ENCODE measurements at regions of chr11 and their contacts with region 1.

Region 1: GRCh38 chr11:119205574-119206510 is at the start of gene CBL:
- DNase-seq: peak; percentile 98
- H3K4me3 Mint-ChIP-seq: peak within 1 kb of the TSS; percentile 91
- H3K27ac Mint-ChIP-seq: peak within 1 kb of the TSS; percentile 85
- H3K4me1 Mint-ChIP-seq: peaks cover 25% of the 10 kb centered on the region
- H3K27me3 Mint-ChIP-seq: no peaks in the 10 kb centered on the region
- total RNA-seq, gene CBL: 30.8 to 31.2 TPM

Region 2: DNA sequence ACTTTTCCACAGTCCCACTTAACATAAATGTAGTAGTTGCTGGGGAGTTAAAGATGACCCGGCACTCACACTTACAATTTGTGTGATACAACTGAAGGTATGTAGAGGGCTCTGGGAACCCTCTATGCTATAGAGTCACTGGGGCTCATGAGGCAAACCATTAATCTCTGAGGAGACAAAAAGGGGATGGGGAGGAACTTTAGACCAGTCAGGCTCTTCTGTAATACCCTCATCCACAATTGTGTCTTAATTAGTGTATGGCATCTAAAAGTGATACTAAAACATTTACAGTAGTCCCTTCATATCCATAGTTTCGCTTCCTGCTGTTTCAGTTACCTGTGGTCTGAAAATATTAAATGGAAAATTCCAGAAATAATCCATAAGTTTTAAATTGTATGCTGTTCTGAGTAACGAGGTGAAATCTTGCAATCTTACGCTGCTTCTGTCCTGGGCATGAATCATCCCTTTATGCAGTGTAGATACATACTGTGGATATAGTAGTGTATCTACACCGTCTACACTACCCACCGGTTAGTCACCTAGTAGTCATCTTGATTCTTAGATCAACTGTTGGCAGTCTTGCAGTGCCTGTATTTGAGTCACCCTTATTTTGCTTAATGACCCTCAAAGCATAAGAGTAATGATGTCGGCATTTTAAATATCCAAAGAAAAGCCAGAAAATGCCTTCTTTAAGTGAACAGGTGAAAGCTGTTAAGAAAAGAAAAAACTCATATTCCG is 12.5 kb after region 1 on chr11:
- CTCF ChIA-PET with region 1: interaction called, 9 read pairs
- POLR2A ChIA-PET with region 1: interaction called, 3 read pairs
- intact Hi-C with region 1: loop called (anchors 1 kb)
- DNase-seq: peak; percentile 22
- H3K4me3 Mint-ChIP-seq: no peak overlapping the region
- H3K27ac Mint-ChIP-seq: peak overlapping the region; percentile 23
- H3K4me1 Mint-ChIP-seq: peaks cover 42% of the 10 kb centered on the region
- H3K27me3 Mint-ChIP-seq: no peaks in the 10 kb centered on the region

Region 3: DNA sequence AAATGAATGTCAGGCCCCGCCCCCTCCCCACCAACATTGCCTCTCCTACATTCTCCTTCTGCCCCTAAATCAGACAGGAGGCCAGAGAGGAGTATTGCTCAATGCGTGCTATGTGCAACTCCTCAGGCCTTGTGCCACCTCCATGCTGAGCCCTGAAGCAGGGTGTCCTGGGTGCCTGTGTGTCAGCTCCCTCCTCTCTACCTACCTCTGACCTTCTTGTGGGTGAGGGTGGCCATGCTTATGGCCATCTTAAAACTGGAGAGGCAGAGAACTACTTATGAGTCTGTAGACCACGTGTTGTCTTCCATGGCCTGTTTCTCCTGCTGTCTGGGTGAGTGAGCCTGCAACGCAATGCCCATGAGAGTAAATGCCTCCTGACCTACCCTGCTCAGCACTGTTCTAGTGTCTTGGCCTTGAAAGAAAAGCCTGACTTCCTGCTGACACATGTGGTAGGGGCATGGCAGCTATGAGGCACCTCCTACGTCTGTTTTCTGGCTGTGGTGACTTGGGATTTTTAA is 100.6 kb after region 1 on chr11:
- CTCF ChIA-PET with region 1: interaction called, 5 read pairs
- POLR2A ChIA-PET with region 1: interaction called, 3 read pairs
- intact Hi-C with region 1: loop called (anchors 1 kb)
- DNase-seq: peak; percentile 57
- H3K4me3 Mint-ChIP-seq: no peak overlapping the region
- H3K27ac Mint-ChIP-seq: peak overlapping the region; percentile 85
- H3K4me1 Mint-ChIP-seq: peaks cover 22% of the 10 kb centered on the region
- H3K27me3 Mint-ChIP-seq: no peaks in the 10 kb centered on the region

Region 4: GRCh38 chr11:119315131-119316015 is 109.5 kb after region 1 on chr11:
- CTCF ChIA-PET with region 1: interaction called, 62 read pairs
- POLR2A ChIA-PET with region 1: no interaction called
- intact Hi-C with region 1: no loop called
- DNase-seq: peak; percentile 66
- H3K4me3 Mint-ChIP-seq: peak overlapping the region; percentile 72
- H3K27ac Mint-ChIP-seq: no peak overlapping the region
- H3K4me1 Mint-ChIP-seq: peaks cover 20% of the 10 kb centered on the region
- H3K27me3 Mint-ChIP-seq: peaks cover 15% of the 10 kb centered on the region

Region 5: DNA sequence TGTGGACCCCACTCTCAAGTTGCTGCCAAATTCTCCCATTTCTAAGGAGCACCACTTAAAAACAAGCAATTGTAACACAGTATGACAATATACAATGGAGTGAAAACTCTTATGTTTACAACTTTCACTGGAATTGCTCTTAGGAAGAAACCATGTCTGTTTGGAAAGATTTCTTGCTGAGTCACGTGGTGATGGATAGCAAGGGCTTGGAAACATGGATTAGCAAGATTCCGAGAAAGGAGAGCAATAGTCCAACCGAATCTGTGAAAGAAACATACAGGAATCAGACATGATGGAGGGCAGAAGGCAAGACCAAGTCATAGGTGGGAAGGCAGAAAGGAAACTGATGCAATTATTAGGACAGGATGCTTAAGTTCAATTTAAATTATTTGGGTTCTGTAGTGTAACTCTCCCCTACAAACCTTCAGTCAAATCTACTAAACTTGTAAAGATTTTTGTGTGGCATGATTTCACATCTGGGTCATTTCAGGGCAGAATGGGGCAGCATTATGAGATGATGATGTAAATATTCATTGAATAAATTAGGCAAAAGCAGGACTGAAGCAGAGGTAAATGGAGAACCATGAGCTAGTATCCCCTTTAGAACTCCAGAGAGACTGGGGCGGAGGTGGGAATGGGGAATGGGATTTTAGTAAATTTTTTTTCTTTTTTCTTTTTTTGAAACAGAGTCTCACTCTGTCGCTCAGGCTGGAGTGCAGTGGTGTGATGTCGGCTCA is 244.9 kb after region 1 on chr11:
- CTCF ChIA-PET with region 1: no interaction called
- POLR2A ChIA-PET with region 1: no interaction called
- intact Hi-C with region 1: no loop called
- DNase-seq: no peak
- H3K4me3 Mint-ChIP-seq: no peak overlapping the region
- H3K27ac Mint-ChIP-seq: no peak overlapping the region
- H3K4me1 Mint-ChIP-seq: no peaks in the 10 kb centered on the region
- H3K27me3 Mint-ChIP-seq: peaks cover 21% of the 10 kb centered on the region